GM12878 (cell line): ENCODE measurements at regions of chr7 and their contacts with region 1.

Region 1: DNA sequence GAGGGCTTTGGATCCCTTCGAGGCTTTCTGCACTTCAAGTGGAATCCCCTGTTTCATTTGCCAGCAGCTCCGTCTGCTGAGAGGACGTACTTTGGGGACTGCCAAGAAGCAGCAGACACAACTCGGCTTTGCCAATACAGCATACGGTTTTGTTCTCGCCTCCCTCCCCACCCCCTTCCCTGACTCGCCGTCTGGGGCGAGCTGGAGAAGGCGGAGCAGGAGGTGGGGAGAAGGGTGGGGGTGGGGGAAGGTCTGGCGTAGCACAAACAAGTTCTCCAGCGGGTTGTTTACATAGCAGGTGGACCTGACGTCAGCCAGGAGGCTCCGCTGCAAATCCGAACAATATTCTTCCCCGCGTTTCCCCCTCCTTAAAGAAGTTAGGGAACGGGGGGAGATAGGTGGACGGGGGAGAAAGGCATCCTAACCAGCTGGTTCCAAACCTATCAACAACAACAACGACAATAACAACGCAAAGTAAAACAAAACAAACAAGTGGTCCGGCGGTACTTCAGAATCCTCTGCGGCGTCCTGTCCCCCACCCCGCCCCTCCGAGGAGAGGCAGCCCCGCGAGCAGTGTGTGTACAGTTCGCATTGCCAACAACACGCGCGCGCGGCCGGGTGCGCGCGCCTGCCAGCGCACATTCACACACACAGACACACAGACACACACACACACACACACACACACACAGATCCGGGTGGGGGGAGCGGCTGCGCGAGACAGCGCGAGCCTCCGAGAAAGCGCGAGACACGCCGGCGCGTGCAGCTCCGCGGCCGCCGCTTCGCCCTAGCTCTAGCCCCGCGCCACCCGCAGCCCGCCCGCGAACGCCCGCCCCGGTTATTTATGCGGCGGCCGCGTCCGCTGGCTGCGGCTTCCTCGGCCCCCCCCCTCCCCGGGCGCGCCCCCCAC is 167.0 kb upstream of the PPP1R3A start:
- DNase-seq: no peak
- ATAC-seq: peak; percentile 60
- H3K4me3 ChIP-seq: peak overlapping the region; percentile 68; the same call in 1 of the 2 replicates
- H3K27ac ChIP-seq: no peak overlapping the region
- H3K4me1 ChIP-seq: no peaks in the 10 kb centered on the region; the same call in 1 of the 2 replicates
- H3K27me3 ChIP-seq: peaks cover 6 to 36% of the 10 kb centered on the region in 2 experiments
- CTCF ChIP-seq: no peak
- EP300 ChIP-seq: no peak
- POLR2A ChIP-seq: no peak
- RAD21 ChIP-seq: no peak

Region 2: GRCh38 chr7:114095885-114096284 is 10.0 kb after region 1 on chr7:
- CTCF ChIA-PET with region 1: no interaction called
- POLR2A ChIA-PET with region 1: no interaction called
- RAD21 ChIA-PET with region 1: no interaction called
- SMC1A ChIA-PET with region 1: no interaction called
- in situ Hi-C with region 1: no loop called
- intact Hi-C with region 1: no loop called
- DNase-seq: no peak
- ATAC-seq: no peak
- H3K4me3 ChIP-seq: no peak overlapping the region
- H3K27ac ChIP-seq: no peak overlapping the region
- H3K4me1 ChIP-seq: no peaks in the 10 kb centered on the region
- H3K27me3 ChIP-seq: no peaks in the 10 kb centered on the region
- CTCF ChIP-seq: no peak
- EP300 ChIP-seq: no peak
- POLR2A ChIP-seq: no peak
- RAD21 ChIP-seq: no peak

Region 3: GRCh38 chr7:114126095-114126494 is 40.2 kb after region 1 on chr7:
- CTCF ChIA-PET with region 1: no interaction called
- POLR2A ChIA-PET with region 1: no interaction called
- RAD21 ChIA-PET with region 1: no interaction called
- SMC1A ChIA-PET with region 1: no interaction called
- in situ Hi-C with region 1: no loop called
- intact Hi-C with region 1: no loop called
- DNase-seq: no peak
- ATAC-seq: no peak
- H3K4me3 ChIP-seq: no peak overlapping the region
- H3K27ac ChIP-seq: no peak overlapping the region
- H3K4me1 ChIP-seq: no peaks in the 10 kb centered on the region
- H3K27me3 ChIP-seq: no peaks in the 10 kb centered on the region
- CTCF ChIP-seq: no peak
- EP300 ChIP-seq: no peak
- POLR2A ChIP-seq: no peak
- RAD21 ChIP-seq: no peak

Region 4: DNA sequence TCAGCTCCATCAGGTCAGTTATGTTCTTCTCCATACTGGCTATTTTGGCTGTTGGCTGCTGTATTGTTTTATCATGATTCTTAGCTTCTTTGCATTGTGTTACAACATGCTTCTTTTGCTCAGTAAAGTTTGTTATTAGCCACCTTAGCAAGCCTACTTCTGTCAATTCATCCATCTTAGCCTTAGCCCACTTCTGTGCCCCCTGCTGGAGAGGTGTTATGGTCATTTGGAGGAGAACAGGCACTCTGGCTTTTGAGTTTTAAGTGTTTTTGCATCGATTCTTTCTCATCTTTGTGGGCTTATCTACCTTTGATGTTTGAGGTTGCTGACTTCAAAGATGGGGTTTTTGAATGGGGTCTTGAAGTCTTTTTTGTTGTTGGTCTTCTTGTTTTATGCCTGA is 124.1 kb after region 1 on chr7:
- CTCF ChIA-PET with region 1: no interaction called
- POLR2A ChIA-PET with region 1: no interaction called
- RAD21 ChIA-PET with region 1: no interaction called
- SMC1A ChIA-PET with region 1: no interaction called
- in situ Hi-C with region 1: no loop called
- intact Hi-C with region 1: loop called (anchors 5 kb)
- DNase-seq: no peak
- ATAC-seq: 0 out of 3 replicates have a peak, but pooled peaks have one; percentile 21
- H3K4me3 ChIP-seq: no peak overlapping the region
- H3K27ac ChIP-seq: no peak overlapping the region
- H3K4me1 ChIP-seq: no peaks in the 10 kb centered on the region
- H3K27me3 ChIP-seq: no peaks in the 10 kb centered on the region
- CTCF ChIP-seq: 0 out of 6 replicates have a peak, but pooled peaks of 1 of the 3 experiments have one; percentile 9
- EP300 ChIP-seq: no peak
- POLR2A ChIP-seq: no peak
- RAD21 ChIP-seq: no peak

Region 5: GRCh38 chr7:114405427-114405826 is 319.6 kb after region 1 on chr7:
- CTCF ChIA-PET with region 1: no interaction called
- POLR2A ChIA-PET with region 1: no interaction called
- RAD21 ChIA-PET with region 1: no interaction called
- SMC1A ChIA-PET with region 1: no interaction called
- in situ Hi-C with region 1: no loop called
- intact Hi-C with region 1: loop called (anchors 10 kb)
- DNase-seq: no peak
- ATAC-seq: peak; percentile 92
- H3K4me3 ChIP-seq: no peak overlapping the region
- H3K27ac ChIP-seq: no peak overlapping the region
- H3K4me1 ChIP-seq: no peaks in the 10 kb centered on the region
- H3K27me3 ChIP-seq: peaks cover 0 to 2% of the 10 kb centered on the region in 2 experiments; a peak in 1 of 4 replicates
- CTCF ChIP-seq: peak in 2 of 3 experiments; percentile 17 to 25; a peak in 3 of 6 replicates
- EP300 ChIP-seq: no peak
- POLR2A ChIP-seq: no peak
- RAD21 ChIP-seq: no peak

Region 6: DNA sequence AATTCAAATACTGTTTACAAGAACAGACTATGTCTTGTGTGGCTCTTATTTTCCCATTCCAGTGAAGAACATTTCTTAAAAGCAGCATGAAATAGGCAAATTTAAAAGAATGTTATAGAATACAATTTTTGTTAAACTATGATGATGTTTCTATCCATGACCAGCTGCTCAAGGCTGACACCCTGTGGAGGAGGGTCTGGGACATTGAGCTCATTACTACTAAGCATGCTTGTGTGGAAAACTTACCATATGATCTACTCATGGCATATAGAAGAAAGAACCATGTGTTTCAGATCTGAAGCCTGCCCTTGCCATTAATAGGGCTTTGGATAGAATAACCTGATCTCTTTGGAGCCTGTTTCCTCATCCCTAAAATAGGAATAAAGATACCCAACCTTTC is 453.7 kb after region 1 on chr7:
- CTCF ChIA-PET with region 1: no interaction called
- POLR2A ChIA-PET with region 1: no interaction called
- RAD21 ChIA-PET with region 1: interaction called, 5 read pairs
- SMC1A ChIA-PET with region 1: interaction called, 4 read pairs
- in situ Hi-C with region 1: no loop called
- intact Hi-C with region 1: loop called (anchors 5 kb)
- DNase-seq: no peak
- ATAC-seq: peak; percentile 72
- H3K4me3 ChIP-seq: no peak overlapping the region
- H3K27ac ChIP-seq: no peak overlapping the region
- H3K4me1 ChIP-seq: no peaks in the 10 kb centered on the region
- H3K27me3 ChIP-seq: no peaks in the 10 kb centered on the region
- CTCF ChIP-seq: peak in 2 of 3 experiments; percentile 28 to 33; a peak in 3 of 6 replicates
- EP300 ChIP-seq: no peak
- POLR2A ChIP-seq: no peak
- RAD21 ChIP-seq: peak; percentile 49; the same call in 1 of the 2 replicates